Activated T-helper 1 cell treated with anti-CD3 and anti-CD28 coated beads, Interleukin-12 subunit alpha, Interleukin-12 subunit beta, Interleukin-2, Interleukin-4 antibody, amounts not matched to agents 30 ng/mL and 10 ng/mL and 1 ng/mL, durations not matched to agents 14 hours and 24 hours and 36 hours (primary cell): ENCODE measurements at regions of chr12 and their contacts with region 1.

Region 1: GRCh38 chr12:13196130-13196921 is at the start of gene EMP1:
- DNase-seq: peak; percentile 65
- H3K4me3 Mint-ChIP-seq: peak within 1 kb of the TSS; percentile 79
- H3K27ac Mint-ChIP-seq: peak within 1 kb of the TSS; percentile 81
- H3K4me1 Mint-ChIP-seq: peaks cover 30% of the 10 kb centered on the region
- H3K27me3 Mint-ChIP-seq: peaks cover 19% of the 10 kb centered on the region
- total RNA-seq, gene EMP1: 29.6 and 33.6 TPM in 2 replicates

Region 2: GRCh38 chr12:12899530-12900380 is 296.6 kb before region 1 on chr12:
- intact Hi-C with region 1: loop called (anchors 1 kb)
- DNase-seq: peak; percentile 26
- H3K4me3 Mint-ChIP-seq: no peak overlapping the region
- H3K27ac Mint-ChIP-seq: peak overlapping the region; percentile 37
- H3K4me1 Mint-ChIP-seq: peaks cover 13% of the 10 kb centered on the region
- H3K27me3 Mint-ChIP-seq: peaks cover 12% of the 10 kb centered on the region

Region 3: DNA sequence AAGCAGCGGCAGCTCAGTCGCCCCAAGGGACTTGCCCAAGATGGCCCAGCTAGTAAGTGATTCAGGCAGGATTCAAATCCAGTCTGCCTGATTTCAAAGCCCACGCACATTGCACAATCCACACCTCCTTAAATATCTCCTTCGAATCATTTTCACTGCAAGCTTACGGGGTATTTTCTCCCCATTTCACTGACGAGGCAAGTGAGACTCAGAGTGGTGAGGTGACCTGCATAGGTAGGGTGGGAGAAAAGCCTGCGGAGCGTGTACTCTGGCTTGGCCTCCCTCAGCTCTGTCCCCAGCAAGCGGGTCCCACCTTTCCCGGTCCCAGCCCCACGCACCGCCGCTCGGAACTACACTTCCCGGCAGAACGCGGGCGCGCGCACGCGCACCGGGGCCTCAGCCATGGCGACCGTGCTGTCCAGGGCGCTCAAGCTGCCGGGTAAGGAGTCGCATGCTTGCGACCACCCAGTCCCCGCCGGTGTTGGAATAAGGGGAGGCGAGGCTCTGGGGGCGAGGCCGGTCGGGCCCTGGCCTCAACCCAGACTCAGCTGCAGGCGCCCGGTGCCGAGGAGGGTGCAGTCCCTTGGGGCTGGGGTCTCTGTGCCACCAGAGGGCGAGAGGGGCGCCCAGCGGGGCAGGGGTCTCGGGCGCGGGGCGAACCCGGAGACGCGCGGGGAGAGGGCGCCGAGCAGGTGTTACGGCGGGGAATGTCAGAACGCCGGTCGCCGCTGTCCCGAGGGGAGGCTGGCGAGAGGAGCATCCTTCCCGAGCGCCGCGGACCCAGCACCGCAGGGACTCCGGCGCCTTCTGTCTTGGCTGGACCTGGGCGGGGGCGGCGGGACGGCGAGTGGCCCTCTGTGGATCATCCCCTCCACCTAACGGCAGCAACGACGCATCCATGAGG is 152.1 kb before region 1 on chr12 and contains the start of gene FAM234B:
- intact Hi-C with region 1: loop called (anchors 5 kb)
- DNase-seq: peak; percentile 62
- H3K4me3 Mint-ChIP-seq: peak within 1 kb of the TSS; percentile 83
- H3K27ac Mint-ChIP-seq: peak within 1 kb of the TSS; percentile 66
- H3K4me1 Mint-ChIP-seq: peaks cover 4% of the 10 kb centered on the region
- H3K27me3 Mint-ChIP-seq: peaks cover 19% of the 10 kb centered on the region
- total RNA-seq, gene FAM234B: 6.0 and 6.6 TPM in 2 replicates

Region 4: GRCh38 chr12:13173012-13173932 is 23.1 kb before region 1 on chr12:
- intact Hi-C with region 1: loop called (anchors 1 kb)
- DNase-seq: peak; percentile 12
- H3K4me3 Mint-ChIP-seq: no peak overlapping the region
- H3K27ac Mint-ChIP-seq: peak overlapping the region; percentile 51
- H3K4me1 Mint-ChIP-seq: peaks cover 25% of the 10 kb centered on the region
- H3K27me3 Mint-ChIP-seq: peaks cover 41% of the 10 kb centered on the region

Region 5: GRCh38 chr12:13211859-13212664 is 15.7 kb after region 1 on chr12:
- intact Hi-C with region 1: loop called (anchors 1 kb)
- DNase-seq: peak; percentile 62
- H3K4me3 Mint-ChIP-seq: no peak overlapping the region
- H3K27ac Mint-ChIP-seq: peak overlapping the region; percentile 41
- H3K4me1 Mint-ChIP-seq: peaks cover 53% of the 10 kb centered on the region
- H3K27me3 Mint-ChIP-seq: no peaks in the 10 kb centered on the region